ENCODE measurements at regions of chr20 and their contacts with region 1.

Region 1: DNA sequence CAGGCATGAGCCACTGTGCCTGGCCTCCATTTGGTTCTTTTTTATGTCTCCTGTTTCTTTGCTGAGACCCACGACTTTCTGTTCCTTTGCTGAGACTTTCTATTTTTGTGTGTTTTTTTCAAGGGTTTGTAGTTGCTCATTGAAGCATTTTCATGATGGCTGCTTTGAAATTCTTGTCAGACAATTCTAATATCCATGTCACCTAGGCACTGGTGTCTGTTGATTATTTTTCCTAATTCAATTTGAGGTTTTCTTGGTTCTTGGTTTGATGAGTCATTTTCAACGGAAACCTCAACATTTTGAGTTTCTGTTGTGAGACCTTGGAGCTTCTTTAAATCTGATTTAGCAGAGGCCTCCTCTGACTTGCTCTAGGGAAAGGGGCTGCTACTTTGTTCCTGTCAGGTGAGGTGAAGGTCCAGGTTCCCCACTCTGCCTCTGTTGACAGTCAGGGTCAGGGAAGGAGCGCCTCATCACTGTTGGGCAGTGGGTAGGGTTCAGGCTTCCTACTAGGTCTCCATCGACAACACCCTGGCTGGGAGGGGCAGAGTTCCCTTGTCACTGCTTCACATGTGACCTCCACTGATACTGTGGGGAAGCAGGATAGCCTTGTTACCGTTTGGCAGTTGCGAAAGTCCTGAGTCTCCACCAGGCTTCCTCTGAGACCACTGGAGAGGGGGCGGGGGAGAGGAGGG is 67.2 kb upstream of the RNF24 start:
- DNase-seq: peak; percentile 69
- ATAC-seq: peak; percentile 78
- H3K4me3 Mint-ChIP-seq: peak overlapping the region; percentile 9
- H3K27ac Mint-ChIP-seq: peak overlapping the region; percentile 87
- H3K4me1 Mint-ChIP-seq: peaks cover 41% of the 10 kb centered on the region
- H3K27me3 Mint-ChIP-seq: peaks cover 5% of the 10 kb centered on the region

Region 2: DNA sequence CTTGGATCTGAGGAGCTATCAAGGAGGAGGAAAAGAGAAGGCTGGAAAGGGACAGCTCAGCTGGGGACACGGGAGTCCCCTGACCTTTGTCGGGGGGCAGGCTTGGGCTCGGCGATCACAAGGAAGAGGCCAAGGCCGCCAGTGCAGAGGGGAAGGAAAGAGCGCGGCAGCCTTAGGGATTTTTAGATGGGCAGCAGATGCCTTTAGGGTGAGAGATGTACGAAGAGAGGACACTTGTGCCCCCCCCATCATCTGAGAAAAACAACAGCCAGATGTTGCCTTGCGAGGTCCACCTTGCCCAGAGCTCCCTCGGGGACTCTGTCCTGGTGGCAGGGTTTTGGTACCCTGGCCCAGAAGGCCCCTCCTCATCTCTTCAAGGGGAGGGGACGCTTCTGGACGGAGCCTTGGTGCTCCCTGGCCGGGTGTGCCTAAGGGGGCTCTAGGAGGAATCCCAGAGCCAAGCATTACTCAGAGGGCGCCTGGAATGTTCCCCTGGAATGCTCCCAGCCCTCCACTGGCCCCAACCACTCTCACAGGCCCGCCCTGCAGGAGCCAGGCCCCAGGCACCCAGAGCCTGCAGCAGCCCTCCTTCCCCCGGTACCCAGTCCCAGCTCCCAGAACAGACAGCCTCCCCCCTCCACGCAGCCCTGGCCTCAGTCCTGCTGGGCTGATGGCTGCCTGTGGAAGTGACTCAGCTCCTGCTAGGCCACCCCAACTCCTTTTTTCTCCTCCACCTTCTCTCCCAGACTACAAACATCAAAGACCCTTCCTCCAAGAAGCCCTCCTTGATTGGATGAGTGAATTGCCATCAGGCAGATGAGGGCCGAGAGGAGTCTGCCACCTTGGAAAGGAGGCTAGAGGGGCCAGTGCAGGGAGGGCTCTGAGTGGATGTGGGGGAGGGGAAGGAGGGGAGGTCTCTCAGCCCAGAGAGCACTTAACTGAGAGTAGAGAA is 402.5 kb before region 1 on chr20:
- CTCF ChIA-PET with region 1: interaction called, 14 read pairs
- POLR2A ChIA-PET with region 1: no interaction called
- intact Hi-C with region 1: loop called (anchors 1 to 5 kb)
- DNase-seq: no peak
- ATAC-seq: no peak
- H3K4me3 Mint-ChIP-seq: no peak overlapping the region
- H3K27ac Mint-ChIP-seq: no peak overlapping the region
- H3K4me1 Mint-ChIP-seq: peaks cover 6% of the 10 kb centered on the region
- H3K27me3 Mint-ChIP-seq: peaks cover 37% of the 10 kb centered on the region

Region 3: GRCh38 chr20:3795511-3796468 is 286.8 kb before region 1 on chr20 and contains the start of gene CDC25B:
- CTCF ChIA-PET with region 1: interaction called, 5 read pairs
- POLR2A ChIA-PET with region 1: no interaction called
- intact Hi-C with region 1: loop called in 1 of 2 experiments (anchors 10 kb)
- DNase-seq: peak; percentile 95
- ATAC-seq: peak; percentile 82
- H3K4me3 Mint-ChIP-seq: peak within 1 kb of the TSS; percentile 93
- H3K27ac Mint-ChIP-seq: peak within 1 kb of the TSS; percentile 98
- H3K4me1 Mint-ChIP-seq: peaks cover 47% of the 10 kb centered on the region
- H3K27me3 Mint-ChIP-seq: no peaks in the 10 kb centered on the region
- total RNA-seq, gene CDC25B: 79.8 to 96.2 TPM

Region 4: DNA sequence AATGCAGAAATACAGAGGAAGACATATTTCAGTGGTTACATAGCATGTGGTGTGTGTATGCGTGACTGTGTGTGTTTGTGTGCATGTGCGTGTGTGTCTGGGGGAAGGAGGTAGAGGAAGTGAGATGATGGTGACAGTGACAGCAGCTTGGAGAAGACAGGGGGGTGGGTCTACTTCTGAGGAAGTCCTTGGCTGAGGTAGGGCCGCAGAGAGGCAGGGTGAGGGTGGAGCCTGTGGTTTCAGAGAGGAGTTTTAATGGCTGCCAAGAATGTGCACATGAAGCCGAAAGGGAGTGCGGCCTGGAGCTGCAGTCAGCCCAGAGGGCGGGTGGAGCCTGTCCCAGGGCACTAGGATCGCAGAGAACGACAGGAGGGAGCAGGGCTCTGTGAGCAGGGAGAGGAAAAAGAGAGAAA is 44.5 kb before region 1 on chr20:
- CTCF ChIA-PET with region 1: interaction called, 5 read pairs
- POLR2A ChIA-PET with region 1: no interaction called
- intact Hi-C with region 1: loop called (anchors 1 kb)
- DNase-seq: peak; percentile 88
- ATAC-seq: peak; percentile 100
- H3K4me3 Mint-ChIP-seq: peak overlapping the region; percentile 69
- H3K27ac Mint-ChIP-seq: peak overlapping the region; percentile 99
- H3K4me1 Mint-ChIP-seq: peaks cover 17% of the 10 kb centered on the region
- H3K27me3 Mint-ChIP-seq: no peaks in the 10 kb centered on the region

Region 5: GRCh38 chr20:4102381-4102780 is 19.8 kb after region 1 on chr20:
- CTCF ChIA-PET with region 1: interaction called, 11 read pairs
- POLR2A ChIA-PET with region 1: no interaction called
- intact Hi-C with region 1: no loop called
- DNase-seq: no peak
- ATAC-seq: peak; percentile 33
- H3K4me3 Mint-ChIP-seq: no peak overlapping the region
- H3K27ac Mint-ChIP-seq: no peak overlapping the region
- H3K4me1 Mint-ChIP-seq: no peaks in the 10 kb centered on the region
- H3K27me3 Mint-ChIP-seq: no peaks in the 10 kb centered on the region

Region 6: DNA sequence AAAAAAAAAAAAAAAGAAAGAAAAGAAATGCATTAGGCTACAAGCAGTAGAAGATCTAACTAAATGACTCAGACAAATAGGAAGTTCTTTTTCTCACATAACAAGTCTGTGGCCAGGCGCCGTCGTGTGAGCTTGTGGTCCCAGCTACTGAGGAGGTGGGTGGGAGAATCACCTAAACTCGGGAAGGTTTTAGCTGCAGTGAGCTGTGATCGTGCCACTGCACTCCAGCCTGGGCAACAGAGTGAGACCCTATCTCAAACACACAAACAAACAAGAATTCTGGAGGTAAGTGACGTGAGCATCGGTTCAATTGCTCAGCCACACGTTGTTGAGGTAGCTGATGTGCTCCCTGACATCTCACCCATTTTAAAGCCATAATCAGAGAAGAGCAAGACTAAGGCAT is 956.7 kb after region 1 on chr20:
- CTCF ChIA-PET with region 1: no interaction called
- POLR2A ChIA-PET with region 1: no interaction called
- intact Hi-C with region 1: no loop called
- DNase-seq: peak; percentile 51
- ATAC-seq: peak; percentile 80
- H3K4me3 Mint-ChIP-seq: no peak overlapping the region
- H3K27ac Mint-ChIP-seq: no peak overlapping the region
- H3K4me1 Mint-ChIP-seq: peaks cover 4% of the 10 kb centered on the region
- H3K27me3 Mint-ChIP-seq: no peaks in the 10 kb centered on the region